BJ (cell line): ENCODE measurements at regions of chr20 and their contacts with region 1.

Region 1: DNA sequence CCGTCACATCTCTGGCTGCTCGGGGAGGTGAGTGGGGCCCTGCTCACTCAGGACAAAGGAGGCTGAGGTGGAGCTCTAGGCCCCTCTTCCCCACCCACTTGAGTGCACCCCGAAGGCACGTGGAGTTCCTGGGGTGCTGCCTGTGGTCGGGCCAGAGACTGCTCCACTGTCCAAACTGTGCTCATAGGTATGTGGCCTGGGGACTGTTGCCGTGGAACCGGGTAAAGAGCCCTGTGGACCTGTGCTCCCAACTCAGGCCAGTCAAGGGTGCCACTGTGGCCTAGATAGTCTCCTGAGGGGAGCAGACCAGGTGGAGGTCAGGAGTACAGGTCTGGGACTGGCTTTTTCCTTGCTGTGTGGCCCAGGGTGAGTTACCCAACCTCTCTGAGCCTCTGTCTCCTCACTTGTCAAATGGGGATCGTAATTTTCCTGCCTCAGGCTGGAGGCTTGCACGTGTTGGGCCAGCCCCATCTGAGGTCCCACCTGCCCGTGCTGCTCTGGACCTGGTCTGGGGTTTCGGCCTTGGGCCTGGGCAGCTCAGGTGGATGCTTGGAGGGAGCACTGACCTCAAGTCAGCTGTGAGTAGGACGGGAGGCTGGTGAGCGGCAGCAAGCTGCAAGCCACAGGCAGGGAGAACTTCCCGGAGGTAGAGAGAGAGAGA is 12.4 kb upstream of the NPBWR2 start:
- DNase-seq: no peak
- H3K4me3 ChIP-seq: no peak overlapping the region
- H3K27me3 ChIP-seq: peaks cover 4% of the 10 kb centered on the region; the same call in 1 of the 2 replicates
- CTCF ChIP-seq: no peak

Region 2: GRCh38 chr20:63980806-63981728 is 138.7 kb before region 1 on chr20 and contains the start of gene PRPF6:
- CTCF ChIA-PET with region 1: interaction called, 14 read pairs
- POLR2A ChIA-PET with region 1: no interaction called
- DNase-seq: peak; percentile 60
- H3K4me3 ChIP-seq: peak within 1 kb of the TSS; percentile 97
- H3K27me3 ChIP-seq: no peaks in the 10 kb centered on the region
- CTCF ChIP-seq: peak; percentile 99
- polyA plus RNA-seq, gene PRPF6: 37.9 and 52.3 TPM in 2 replicates

Region 3: DNA sequence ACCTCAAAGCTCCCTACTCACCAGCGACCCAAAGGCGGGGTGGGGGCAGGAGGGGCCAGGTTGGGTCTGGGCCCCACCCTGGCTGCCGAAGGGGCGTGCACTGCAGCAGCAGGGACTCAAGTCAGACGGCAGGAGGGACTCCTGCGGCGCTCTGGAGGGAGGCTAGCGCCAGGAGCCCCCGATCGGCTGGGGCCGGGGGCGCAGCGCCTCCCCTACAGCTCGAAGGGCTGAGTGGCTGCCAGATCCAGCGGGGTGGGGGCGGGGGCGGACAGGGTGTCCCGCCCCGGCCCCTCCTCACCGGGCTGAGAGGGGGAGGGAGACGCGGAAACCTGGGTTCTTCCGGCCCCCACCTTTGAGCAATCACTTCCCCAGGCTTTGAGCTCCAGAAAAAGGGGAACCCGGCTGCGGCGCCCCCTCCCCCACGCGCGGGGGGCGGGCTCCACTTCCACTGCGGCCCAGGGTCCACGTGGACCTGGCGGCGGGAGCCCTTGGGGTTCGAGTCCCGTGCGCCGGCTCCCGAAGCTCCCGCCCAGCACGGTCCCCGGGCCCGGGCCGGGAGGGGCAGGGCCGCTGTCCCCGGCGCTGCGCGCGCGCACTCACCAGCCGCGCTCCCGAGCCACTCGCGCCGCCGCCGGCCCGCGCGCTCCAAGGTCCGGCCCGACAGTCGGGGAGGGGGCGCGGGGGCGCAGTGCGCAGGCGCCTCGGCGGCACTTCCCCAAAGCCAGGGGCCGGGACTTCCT is 40.4 kb before region 1 on chr20 and contains the start of gene RGS19:
- CTCF ChIA-PET with region 1: interaction called, 49 read pairs
- POLR2A ChIA-PET with region 1: no interaction called
- DNase-seq: peak; percentile 7
- H3K4me3 ChIP-seq: peak within 1 kb of the TSS; percentile 65
- H3K27me3 ChIP-seq: peaks cover 6% of the 10 kb centered on the region
- CTCF ChIP-seq: no peak
- polyA plus RNA-seq, gene RGS19: 12.1 and 14.5 TPM in 2 replicates

Region 4: DNA sequence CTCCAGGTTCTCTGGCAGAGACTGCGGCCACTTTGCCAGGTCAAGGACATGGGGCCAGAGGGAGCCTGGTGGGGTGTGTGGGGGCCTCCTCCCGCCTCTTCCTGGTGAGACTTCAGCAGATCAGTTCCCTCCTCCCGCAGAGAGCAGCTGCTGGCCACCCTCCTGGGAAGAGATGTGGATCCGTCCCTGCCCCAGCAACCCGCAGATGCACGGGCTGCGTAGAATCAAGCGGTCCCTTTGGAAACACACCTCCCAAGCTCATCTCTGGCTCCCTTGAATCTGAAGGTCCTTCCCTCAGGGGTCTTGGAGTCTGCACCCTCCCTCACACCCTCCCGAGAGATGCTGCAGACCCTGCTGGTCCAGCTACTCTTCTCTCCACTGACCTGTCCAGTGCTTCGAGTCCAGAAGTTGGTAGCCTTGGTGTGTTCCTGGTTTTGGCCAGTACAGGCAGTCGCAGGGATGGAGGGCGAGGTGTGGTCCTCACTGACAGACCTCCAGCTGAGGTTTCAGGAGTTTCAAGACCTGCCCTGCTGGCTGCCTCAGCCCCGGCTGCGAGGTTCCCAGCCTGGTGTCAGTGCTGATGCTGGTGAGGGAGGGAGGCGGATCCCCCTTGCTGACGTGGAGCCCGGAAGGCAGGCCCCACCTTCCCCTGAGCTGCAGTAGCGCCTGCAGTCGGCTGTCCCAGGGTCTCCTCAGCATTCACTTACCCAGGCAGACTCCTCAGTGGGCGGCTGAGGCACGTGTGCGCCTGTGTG is 12.7 kb before region 1 on chr20 and contains the start of gene NPBWR2:
- CTCF ChIA-PET with region 1: interaction called, 20 read pairs
- POLR2A ChIA-PET with region 1: no interaction called
- DNase-seq: no peak
- H3K4me3 ChIP-seq: no peak within 1 kb of the TSS
- H3K27me3 ChIP-seq: peaks cover 8% of the 10 kb centered on the region
- CTCF ChIP-seq: no peak
- polyA plus RNA-seq, gene NPBWR2: not detected in 2 replicates